Naive thymus-derived CD4-positive, alpha-beta T cell (primary cell): ENCODE measurements at regions of chr6 and their contacts with region 1.

Region 1: DNA sequence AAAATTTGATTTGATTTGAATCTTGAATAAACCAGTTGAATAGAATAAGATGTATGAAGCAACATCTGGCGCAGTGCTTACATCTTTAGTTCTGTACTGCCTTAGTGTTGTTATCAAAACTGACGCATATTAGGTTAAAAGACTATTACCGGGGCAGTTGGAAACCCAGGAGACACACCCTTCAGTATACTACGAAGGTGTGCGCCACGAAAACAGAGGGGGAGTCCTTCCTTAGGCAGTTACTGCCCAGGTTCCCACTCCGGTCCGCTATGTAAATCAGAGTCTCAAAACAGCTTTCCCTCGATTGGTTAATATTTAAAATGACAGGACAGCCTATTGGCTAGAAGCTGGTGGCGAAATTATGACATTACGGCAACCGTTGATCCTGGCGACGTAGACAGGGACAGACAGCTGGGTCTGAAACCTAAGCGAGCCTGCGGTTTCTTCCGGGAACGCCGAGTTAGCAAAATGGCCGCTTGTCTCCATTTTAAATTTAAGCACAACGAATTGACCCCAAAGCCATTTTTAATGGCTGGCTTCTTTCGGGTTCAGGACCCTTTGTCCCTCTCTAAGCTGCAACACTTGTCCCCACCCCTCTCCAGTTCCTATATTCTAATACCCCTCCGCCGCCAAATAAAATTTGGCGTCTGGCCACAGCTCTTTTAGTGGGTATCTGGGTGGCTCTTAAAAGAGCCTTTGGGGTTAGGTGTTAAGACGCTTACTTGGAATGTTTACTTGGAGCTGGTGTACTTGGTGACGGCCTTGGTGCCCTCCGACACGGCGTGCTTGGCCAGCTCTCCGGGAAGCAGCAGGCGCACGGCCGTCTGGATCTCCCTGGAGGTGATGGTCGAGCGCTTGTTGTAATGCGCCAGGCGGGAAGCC is 35.8 kb downstream of the HFE start:
- DNase-seq: peak; percentile 68 to 99 (median 96)
- ATAC-seq: peak; percentile 78
- H3K4me3 ChIP-seq: peak overlapping the region; percentile 94
- H3K4me3 Mint-ChIP-seq: peak overlapping the region; percentile 92 to 100 (median 98)
- H3K27ac ChIP-seq: peak overlapping the region; percentile 86
- H3K27ac Mint-ChIP-seq: peak overlapping the region; percentile 97 to 100 (median 99)
- H3K4me1 ChIP-seq: peaks cover 18 to 23% of the 10 kb centered on the region in 2 donors
- H3K4me1 Mint-ChIP-seq: peaks cover 22 to 54% (median 30%) of the 10 kb centered on the region in 7 donors
- H3K27me3 ChIP-seq: no peaks in the 10 kb centered on the region
- H3K27me3 Mint-ChIP-seq: peaks cover 0 to 21% (median 0%) of the 10 kb centered on the region in 5 donors

Region 2: GRCh38 chr6:26054857-26055669 is 68.0 kb before region 1 on chr6:
- CTCF ChIA-PET with region 1: interaction called, 3 read pairs
- POLR2A ChIA-PET with region 1: interaction called, 267 read pairs
- intact Hi-C with region 1: loop called (anchors 1 kb)
- DNase-seq: peak; percentile 54 to 94 (median 90)
- ATAC-seq: peak; percentile 81
- H3K4me3 ChIP-seq: peak overlapping the region; percentile 93
- H3K4me3 Mint-ChIP-seq: peak overlapping the region; percentile 88 to 99 (median 95)
- H3K27ac ChIP-seq: peak overlapping the region; percentile 83
- H3K27ac Mint-ChIP-seq: peak overlapping the region; percentile 95 to 99 (median 98)
- H3K4me1 ChIP-seq: peaks cover 0 to 14% of the 10 kb centered on the region in 2 donors
- H3K4me1 Mint-ChIP-seq: peaks cover 9 to 52% (median 10%) of the 10 kb centered on the region in 7 donors
- H3K27me3 ChIP-seq: no peaks in the 10 kb centered on the region
- H3K27me3 Mint-ChIP-seq: peaks cover 0 to 10% (median 0%) of the 10 kb centered on the region in 5 donors

Region 3: DNA sequence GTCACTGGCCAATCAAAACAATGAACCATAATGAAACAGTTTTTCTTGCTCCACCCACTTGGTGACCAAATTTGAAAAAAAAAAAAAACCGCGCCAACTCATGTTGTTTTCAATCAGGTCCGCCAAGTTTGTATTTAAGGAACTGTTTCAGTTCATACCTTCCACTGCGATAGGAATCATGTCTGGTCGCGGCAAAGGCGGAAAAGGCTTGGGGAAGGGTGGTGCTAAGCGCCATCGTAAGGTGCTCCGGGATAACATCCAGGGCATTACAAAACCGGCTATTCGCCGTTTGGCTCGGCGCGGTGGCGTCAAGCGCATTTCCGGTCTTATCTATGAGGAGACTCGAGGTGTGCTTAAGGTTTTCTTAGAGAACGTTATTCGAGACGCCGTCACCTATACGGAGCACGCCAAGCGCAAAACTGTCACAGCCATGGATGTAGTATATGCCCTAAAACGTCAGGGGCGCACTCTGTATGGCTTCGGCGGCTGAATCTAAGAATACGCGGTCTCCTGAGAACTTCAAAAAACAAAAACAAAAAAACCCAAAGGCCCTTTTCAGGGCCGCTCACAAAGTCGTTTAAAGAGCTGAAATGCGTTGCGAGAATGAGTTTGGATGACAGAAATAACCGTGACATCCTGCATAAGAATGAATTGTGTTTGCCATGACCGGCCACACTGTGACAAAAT is 19.1 kb before region 1 on chr6:
- CTCF ChIA-PET with region 1: interaction called, 5 read pairs
- POLR2A ChIA-PET with region 1: interaction called, 324 read pairs
- intact Hi-C with region 1: loop called (anchors 1 kb)
- DNase-seq: peak; percentile 83 to 96 (median 95)
- ATAC-seq: peak; percentile 94
- H3K4me3 ChIP-seq: peak overlapping the region; percentile 40
- H3K4me3 Mint-ChIP-seq: peak overlapping the region; percentile 81 to 97 (median 89)
- H3K27ac ChIP-seq: peak overlapping the region; percentile 75
- H3K27ac Mint-ChIP-seq: peak overlapping the region; percentile 96 to 100 (median 98)
- H3K4me1 ChIP-seq: peaks cover 4 to 12% of the 10 kb centered on the region in 2 donors
- H3K4me1 Mint-ChIP-seq: peaks cover 7 to 25% (median 22%) of the 10 kb centered on the region in 7 donors
- H3K27me3 ChIP-seq: no peaks in the 10 kb centered on the region
- H3K27me3 Mint-ChIP-seq: peaks cover 0 to 3% (median 0%) of the 10 kb centered on the region in 5 donors

Region 4: GRCh38 chr6:26183581-26184366 is 60.7 kb after region 1 on chr6:
- CTCF ChIA-PET with region 1: interaction called, 4 read pairs
- POLR2A ChIA-PET with region 1: interaction called, 764 read pairs
- intact Hi-C with region 1: no loop called
- DNase-seq: peak; percentile 43 to 83 (median 77)
- ATAC-seq: peak; percentile 91
- H3K4me3 ChIP-seq: peak overlapping the region; percentile 82
- H3K4me3 Mint-ChIP-seq: peak overlapping the region; percentile 84 to 99 (median 98)
- H3K27ac ChIP-seq: peak overlapping the region; percentile 76
- H3K27ac Mint-ChIP-seq: peak overlapping the region; percentile 83 to 99 (median 90)
- H3K4me1 ChIP-seq: peaks cover 13 to 30% of the 10 kb centered on the region in 2 donors
- H3K4me1 Mint-ChIP-seq: peaks cover 19 to 59% (median 49%) of the 10 kb centered on the region in 7 donors
- H3K27me3 ChIP-seq: no peaks in the 10 kb centered on the region
- H3K27me3 Mint-ChIP-seq: no peaks in the 10 kb centered on the region

Region 5: GRCh38 chr6:26234421-26235296 is 111.6 kb after region 1 on chr6:
- CTCF ChIA-PET with region 1: no interaction called
- POLR2A ChIA-PET with region 1: interaction called, 188 read pairs
- intact Hi-C with region 1: loop called in 1 of 2 experiments (anchors 1 kb)
- DNase-seq: peak; percentile 48 to 94 (median 85)
- ATAC-seq: peak; percentile 80
- H3K4me3 ChIP-seq: peak overlapping the region; percentile 93
- H3K4me3 Mint-ChIP-seq: peak overlapping the region; percentile 87 to 99 (median 94)
- H3K27ac ChIP-seq: peak overlapping the region; percentile 87
- H3K27ac Mint-ChIP-seq: peak overlapping the region; percentile 93 to 100 (median 98)
- H3K4me1 ChIP-seq: peaks cover under 1 to 18% of the 10 kb centered on the region in 2 donors
- H3K4me1 Mint-ChIP-seq: peaks cover 18 to 52% (median 38%) of the 10 kb centered on the region in 7 donors
- H3K27me3 ChIP-seq: no peaks in the 10 kb centered on the region
- H3K27me3 Mint-ChIP-seq: peaks cover 0 to 15% (median 0%) of the 10 kb centered on the region in 5 donors

Region 6: GRCh38 chr6:27825025-27825793 is 1702.2 kb after region 1 on chr6:
- CTCF ChIA-PET with region 1: no interaction called
- POLR2A ChIA-PET with region 1: interaction called, 16 read pairs
- intact Hi-C with region 1: no loop called
- DNase-seq: no peak
- ATAC-seq: no peak
- H3K4me3 ChIP-seq: peak overlapping the region; percentile 87
- H3K4me3 Mint-ChIP-seq: peak overlapping the region; percentile 82 to 99 (median 94)
- H3K27ac ChIP-seq: peak overlapping the region; percentile 89
- H3K27ac Mint-ChIP-seq: peak overlapping the region; percentile 90 to 100 (median 98)
- H3K4me1 ChIP-seq: peaks cover 6% of the 10 kb centered on the region in 2 donors
- H3K4me1 Mint-ChIP-seq: peaks cover 11 to 50% (median 33%) of the 10 kb centered on the region in 7 donors
- H3K27me3 ChIP-seq: no peaks in the 10 kb centered on the region
- H3K27me3 Mint-ChIP-seq: peaks cover 0 to 4% (median 0%) of the 10 kb centered on the region in 5 donors